ENCODE measurements at regions of chr15 and their contacts with region 1.

Region 1: GRCh38 chr15:66946578-66947164 is 118.7 kb upstream of the SMAD3 start:
- DNase-seq: peak; percentile 70
- H3K4me3 ChIP-seq: no peak overlapping the region
- H3K27ac ChIP-seq: no peak overlapping the region
- H3K4me1 ChIP-seq: peaks cover 4% of the 10 kb centered on the region
- H3K27me3 ChIP-seq: no peaks in the 10 kb centered on the region
- CTCF ChIP-seq: peak; percentile 81
- POLR2A ChIP-seq: no peak

Region 2: GRCh38 chr15:65641768-65642475 is 1304.7 kb before region 1 on chr15:
- CTCF ChIA-PET with region 1: no interaction called
- POLR2A ChIA-PET with region 1: no interaction called
- dilution Hi-C with region 1: no loop called
- intact Hi-C with region 1: no loop called
- DNase-seq: no peak
- H3K4me3 ChIP-seq: no peak overlapping the region
- H3K27ac ChIP-seq: peak overlapping the region; percentile 27
- H3K4me1 ChIP-seq: peaks cover 28% of the 10 kb centered on the region
- H3K27me3 ChIP-seq: no peaks in the 10 kb centered on the region
- CTCF ChIP-seq: no peak
- POLR2A ChIP-seq: no peak

Region 3: GRCh38 chr15:66931768-66932633 is 14.7 kb before region 1 on chr15:
- CTCF ChIA-PET with region 1: interaction called, 13 read pairs
- POLR2A ChIA-PET with region 1: no interaction called
- dilution Hi-C with region 1: no loop called
- intact Hi-C with region 1: no loop called
- DNase-seq: peak; percentile 58
- H3K4me3 ChIP-seq: no peak overlapping the region
- H3K27ac ChIP-seq: peak overlapping the region; percentile 21
- H3K4me1 ChIP-seq: peaks cover 14% of the 10 kb centered on the region
- H3K27me3 ChIP-seq: no peaks in the 10 kb centered on the region
- CTCF ChIP-seq: no peak
- POLR2A ChIP-seq: no peak

Region 4: GRCh38 chr15:67142767-67143100 is 196.1 kb after region 1 on chr15:
- CTCF ChIA-PET with region 1: interaction called, 20 read pairs
- POLR2A ChIA-PET with region 1: no interaction called
- dilution Hi-C with region 1: no loop called
- intact Hi-C with region 1: no loop called
- DNase-seq: peak; percentile 80
- H3K4me3 ChIP-seq: no peak overlapping the region
- H3K27ac ChIP-seq: peak overlapping the region; percentile 42
- H3K4me1 ChIP-seq: peaks cover 92% of the 10 kb centered on the region
- H3K27me3 ChIP-seq: no peaks in the 10 kb centered on the region
- CTCF ChIP-seq: no peak
- POLR2A ChIP-seq: no peak

Region 5: GRCh38 chr15:67188551-67189218 is 242.0 kb after region 1 on chr15:
- CTCF ChIA-PET with region 1: interaction called, 14 read pairs
- POLR2A ChIA-PET with region 1: no interaction called
- dilution Hi-C with region 1: no loop called
- intact Hi-C with region 1: no loop called
- DNase-seq: no peak
- H3K4me3 ChIP-seq: no peak overlapping the region
- H3K27ac ChIP-seq: no peak overlapping the region
- H3K4me1 ChIP-seq: no peaks in the 10 kb centered on the region
- H3K27me3 ChIP-seq: no peaks in the 10 kb centered on the region
- CTCF ChIP-seq: no peak
- POLR2A ChIP-seq: no peak

Region 6: GRCh38 chr15:67254238-67255175 is 307.8 kb after region 1 on chr15 and contains the starts of genes AAGAB and IQCH:
- CTCF ChIA-PET with region 1: interaction called, 4 read pairs
- POLR2A ChIA-PET with region 1: no interaction called
- dilution Hi-C with region 1: no loop called
- intact Hi-C with region 1: loop called (anchors 5 kb)
- DNase-seq: peak; percentile 98
- H3K4me3 ChIP-seq: peak within 1 kb of the TSS; percentile 90 to 97 (median 95)
- H3K27ac ChIP-seq: peak within 1 kb of the TSS; percentile 93
- H3K4me1 ChIP-seq: peaks cover 7% of the 10 kb centered on the region
- H3K27me3 ChIP-seq: no peaks in the 10 kb centered on the region
- CTCF ChIP-seq: no peak
- POLR2A ChIP-seq: peak; percentile 84
- total RNA-seq, gene AAGAB: 38.0 and 42.6 TPM in 2 replicates
- total RNA-seq, gene IQCH: 0.51 and 2.6 TPM in 2 replicates

Region 7: GRCh38 chr15:67433495-67434099 is 486.9 kb after region 1 on chr15:
- CTCF ChIA-PET with region 1: interaction called, 37 read pairs
- POLR2A ChIA-PET with region 1: no interaction called
- dilution Hi-C with region 1: loop called (anchors 25 kb)
- intact Hi-C with region 1: loop called (anchors 1 kb)
- DNase-seq: peak; percentile 66
- H3K4me3 ChIP-seq: no peak overlapping the region
- H3K27ac ChIP-seq: no peak overlapping the region
- H3K4me1 ChIP-seq: no peaks in the 10 kb centered on the region
- H3K27me3 ChIP-seq: no peaks in the 10 kb centered on the region
- CTCF ChIP-seq: peak; percentile 69 to 77
- POLR2A ChIP-seq: no peak

Region 8: GRCh38 chr15:67839929-67840748 is 893.5 kb after region 1 on chr15 and contains the start of gene RNU6-1:
- CTCF ChIA-PET with region 1: interaction called, 11 read pairs
- POLR2A ChIA-PET with region 1: no interaction called
- dilution Hi-C with region 1: no loop called
- intact Hi-C with region 1: loop called (anchors 1 kb)
- DNase-seq: peak; percentile 93
- H3K4me3 ChIP-seq: peak within 1 kb of the TSS; percentile 69 to 80 (median 75)
- H3K27ac ChIP-seq: peak within 1 kb of the TSS; percentile 82
- H3K4me1 ChIP-seq: peaks cover 25% of the 10 kb centered on the region
- H3K27me3 ChIP-seq: peaks cover 19 to 23% of the 10 kb centered on the region in 2 experiments
- CTCF ChIP-seq: no peak
- POLR2A ChIP-seq: peak; percentile 85
- total RNA-seq, gene RNU6-1: not detected in 2 replicates